HepG2 (cell line): ENCODE measurements at regions of chr2 and their contacts with region 1.

Region 1: GRCh38 chr2:172128484-172128883 is 25.8 kb upstream of the DLX2 start:
- DNase-seq: no peak
- ATAC-seq: no peak
- H3K4me3 ChIP-seq: no peak overlapping the region
- H3K27ac ChIP-seq: no peak overlapping the region
- H3K4me1 ChIP-seq: no peaks in the 10 kb centered on the region
- H3K27me3 ChIP-seq: no peaks in the 10 kb centered on the region; a peak in 1 of 5 replicates
- CTCF ChIP-seq: no peak
- EP300 ChIP-seq: no peak
- POLR2A ChIP-seq: no peak
- RAD21 ChIP-seq: no peak

Region 2: GRCh38 chr2:171574149-171574795 is 554.2 kb before region 1 on chr2:
- CTCF ChIA-PET with region 1: interaction called, 9 read pairs
- POLR2A ChIA-PET with region 1: no interaction called
- in situ Hi-C with region 1: no loop called
- intact Hi-C with region 1: loop called (anchors 5 kb)
- DNase-seq: peak; percentile 66
- ATAC-seq: peak; percentile 99
- H3K4me3 ChIP-seq: peak overlapping the region; percentile 28 to 60 (median 60); a peak in 5 of 6 replicates
- H3K27ac ChIP-seq: no peak overlapping the region
- H3K4me1 ChIP-seq: peaks cover 7% of the 10 kb centered on the region; the same call in 1 of the 2 replicates
- H3K27me3 ChIP-seq: peaks cover 0 to 36% of the 10 kb centered on the region in 2 experiments; a peak in 2 of 5 replicates
- CTCF ChIP-seq: peak; percentile 97
- EP300 ChIP-seq: no peak
- POLR2A ChIP-seq: no peak
- RAD21 ChIP-seq: peak; percentile 95

Region 3: DNA sequence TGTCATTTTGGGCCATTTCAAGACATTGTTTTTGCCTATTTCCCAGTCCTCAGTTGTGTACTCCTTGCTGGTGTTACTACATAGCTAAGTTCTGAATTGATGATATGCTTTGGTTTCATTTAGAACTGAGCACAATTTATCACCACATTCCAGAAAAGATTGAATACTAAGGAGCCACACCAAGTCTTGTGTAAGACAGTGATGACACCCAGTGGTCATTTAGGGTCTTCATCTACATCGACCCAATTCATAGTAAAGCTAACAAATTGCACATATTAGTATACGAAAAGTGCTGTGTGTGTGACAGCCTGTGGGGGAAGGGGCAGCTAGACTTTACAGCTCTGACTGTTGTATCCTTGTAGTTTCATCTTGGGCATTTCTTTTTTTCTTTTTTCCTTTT is 14.9 kb before region 1 on chr2:
- CTCF ChIA-PET with region 1: no interaction called
- POLR2A ChIA-PET with region 1: no interaction called
- in situ Hi-C with region 1: no loop called
- intact Hi-C with region 1: loop called (anchors 1 kb)
- DNase-seq: peak; percentile 60
- ATAC-seq: peak; percentile 52
- H3K4me3 ChIP-seq: no peak overlapping the region
- H3K27ac ChIP-seq: no peak overlapping the region
- H3K4me1 ChIP-seq: peaks cover 31% of the 10 kb centered on the region
- H3K27me3 ChIP-seq: peaks cover under 1 to 7% of the 10 kb centered on the region in 2 experiments; a peak in 2 of 5 replicates
- CTCF ChIP-seq: peak; percentile 81
- EP300 ChIP-seq: no peak
- POLR2A ChIP-seq: no peak
- RAD21 ChIP-seq: peak; percentile 17; the same call in 1 of the 2 replicates